ENCODE measurements at regions of chr10 and their contacts with region 1.

Region 1: GRCh38 chr10:69123747-69124562 is at the start of gene VPS26A:
- DNase-seq: peak; percentile 96 to 99
- H3K4me3 ChIP-seq: peak within 1 kb of the TSS; percentile 92 to 96
- H3K27ac ChIP-seq: peak within 1 kb of the TSS; percentile 98 to 99
- H3K4me1 ChIP-seq: peaks cover 0 to 17% of the 10 kb centered on the region in 2 donors
- H3K27me3 ChIP-seq: no peaks in the 10 kb centered on the region
- CTCF ChIP-seq: peak in 1 of 3 experiments; percentile 37
- total RNA-seq, gene VPS26A: 26.0 TPM

Region 2: GRCh38 chr10:68720793-68721672 is 402.9 kb before region 1 on chr10 and contains the start of gene CCAR1:
- intact Hi-C with region 1: loop called (anchors 5 kb)
- DNase-seq: peak; percentile 74 to 98
- H3K4me3 ChIP-seq: peak within 1 kb of the TSS; percentile 83 to 91
- H3K27ac ChIP-seq: peak within 1 kb of the TSS; percentile 91 to 97
- H3K4me1 ChIP-seq: peaks cover 0 to 10% of the 10 kb centered on the region in 2 donors
- H3K27me3 ChIP-seq: no peaks in the 10 kb centered on the region
- CTCF ChIP-seq: no peak
- total RNA-seq, gene CCAR1: 9.5 TPM

Region 3: DNA sequence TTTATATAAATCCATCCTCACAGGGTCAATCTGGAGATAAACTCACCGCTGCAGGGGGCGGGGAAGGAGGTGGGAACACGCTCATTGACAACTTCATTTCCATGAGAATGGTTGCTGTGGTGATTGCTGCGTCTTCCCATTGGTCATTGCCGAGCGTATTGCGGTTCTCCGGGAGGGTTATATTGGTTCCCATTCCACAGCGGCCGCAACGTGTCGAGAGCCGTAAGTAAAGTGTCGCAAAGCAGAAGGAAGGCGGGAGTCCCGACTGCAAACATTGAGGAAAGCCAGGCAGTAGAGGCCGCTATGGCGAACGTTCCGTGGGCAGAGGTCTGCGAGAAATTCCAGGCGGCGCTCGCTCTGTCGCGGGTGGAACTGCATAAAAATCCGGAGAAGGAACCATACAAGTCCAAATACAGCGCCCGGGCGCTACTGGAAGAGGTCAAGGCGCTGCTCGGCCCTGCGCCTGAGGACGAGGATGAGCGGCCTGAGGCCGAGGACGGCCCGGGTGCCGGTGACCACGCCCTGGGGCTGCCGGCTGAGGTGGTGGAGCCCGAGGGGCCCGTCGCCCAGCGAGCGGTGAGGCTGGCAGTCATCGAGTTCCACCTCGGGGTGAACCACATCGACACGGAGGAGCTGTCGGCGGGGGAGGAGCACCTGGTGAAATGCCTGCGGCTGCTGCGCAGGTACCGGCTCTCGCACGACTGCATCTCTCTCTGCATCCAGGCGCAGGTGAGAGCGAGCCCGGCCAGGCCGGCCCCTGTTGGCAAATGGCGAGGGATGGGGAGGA is 135.2 kb before region 1 on chr10 and contains the start of gene KIFBP:
- intact Hi-C with region 1: loop called (anchors 1 kb)
- DNase-seq: peak; percentile 89 to 98
- H3K4me3 ChIP-seq: peak within 1 kb of the TSS; percentile 71 to 85
- H3K27ac ChIP-seq: peak within 1 kb of the TSS; percentile 85 to 88
- H3K4me1 ChIP-seq: peaks cover 5 to 36% of the 10 kb centered on the region in 2 donors
- H3K27me3 ChIP-seq: no peaks in the 10 kb centered on the region
- CTCF ChIP-seq: peak; percentile 28 to 61 (median 56)
- total RNA-seq, gene KIFBP: 25.3 TPM

Region 4: DNA sequence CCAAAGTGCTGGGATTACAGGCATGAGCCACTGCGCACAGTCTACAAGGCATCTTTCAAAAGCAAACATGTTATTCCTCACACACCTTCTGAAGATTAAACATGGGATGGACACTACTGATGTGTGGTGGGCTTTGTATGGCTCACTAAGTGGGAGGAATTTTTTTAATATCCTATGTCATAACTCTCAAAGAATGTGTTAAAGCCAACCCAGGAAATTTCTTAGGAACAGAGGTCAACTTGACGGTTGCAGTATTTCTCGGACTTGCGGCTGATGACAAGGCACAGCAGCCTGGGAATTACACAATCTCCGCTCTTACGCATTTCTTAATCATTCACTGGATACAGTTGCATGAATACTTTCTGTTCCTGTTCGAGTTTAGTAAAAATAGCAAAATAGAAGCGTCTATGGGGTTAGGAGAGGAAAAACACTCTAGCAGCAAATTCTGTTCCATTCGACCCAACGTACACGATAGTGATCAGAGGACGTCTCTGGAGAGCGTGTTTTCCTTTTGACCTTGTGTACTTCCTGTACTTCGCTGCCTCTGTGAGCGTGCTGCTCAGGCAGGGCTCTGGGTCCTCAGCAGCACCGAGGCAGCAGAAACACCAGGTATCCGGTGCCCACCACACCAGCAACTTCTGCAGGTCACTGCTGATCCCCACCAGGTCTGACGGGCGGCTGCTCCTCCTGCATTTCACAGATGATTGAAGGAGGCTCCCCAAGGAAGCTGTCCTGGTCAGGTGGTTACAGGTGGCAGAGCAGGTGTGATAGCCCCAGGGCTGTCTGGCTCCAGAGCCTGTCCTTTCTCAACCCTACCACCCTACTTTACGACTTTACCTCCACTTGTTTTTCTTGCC is 62.4 kb before region 1 on chr10:
- intact Hi-C with region 1: loop called (anchors 2 kb)
- DNase-seq: peak; percentile 53 to 86
- H3K4me3 ChIP-seq: peak overlapping the region; percentile 27 to 49
- H3K27ac ChIP-seq: peak overlapping the region; percentile 87 to 96
- H3K4me1 ChIP-seq: peaks cover 10 to 19% of the 10 kb centered on the region in 2 donors
- H3K27me3 ChIP-seq: no peaks in the 10 kb centered on the region
- CTCF ChIP-seq: no peak

Region 5: DNA sequence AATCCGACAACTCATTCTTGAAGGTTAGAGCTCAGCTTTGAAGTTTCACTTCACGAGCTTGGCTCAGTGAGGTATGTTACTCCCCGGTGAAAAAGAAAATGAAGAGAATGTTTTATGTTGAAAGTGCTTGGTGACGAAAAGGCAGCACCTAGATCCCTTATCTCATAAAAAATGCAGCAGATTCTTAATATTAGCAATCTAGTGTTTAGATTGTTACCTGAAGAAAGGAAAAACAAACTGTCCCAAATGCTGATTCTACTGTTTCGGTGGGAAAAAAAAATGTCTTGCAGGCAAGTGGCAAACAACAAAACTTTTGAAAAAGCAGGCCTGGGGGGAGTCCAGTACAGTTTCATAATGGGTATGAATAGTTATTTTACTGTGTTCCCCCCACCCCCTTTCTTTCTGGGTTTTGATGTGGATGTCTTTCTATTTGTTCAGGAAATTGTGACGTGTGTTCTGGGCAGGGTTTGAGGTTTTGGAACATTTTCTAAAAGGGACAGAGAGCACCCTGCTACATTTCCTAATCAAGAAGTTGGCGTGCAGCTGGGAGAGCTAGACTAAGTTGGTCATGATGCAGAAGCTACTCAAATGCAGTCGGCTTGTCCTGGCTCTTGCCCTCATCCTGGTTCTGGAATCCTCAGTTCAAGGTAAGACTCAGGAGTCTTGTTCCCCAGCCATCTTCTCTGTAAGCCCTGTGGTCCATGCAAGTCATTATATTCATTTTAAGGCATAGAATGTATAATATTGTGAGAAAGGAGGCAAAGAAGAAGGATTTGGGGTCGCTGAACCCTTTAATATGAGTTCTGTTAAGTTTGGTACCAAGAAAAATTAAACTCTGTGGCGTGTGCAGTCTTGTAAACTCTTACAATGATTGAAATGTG is 36.1 kb before region 1 on chr10 and contains the start of gene SRGN:
- intact Hi-C with region 1: loop called (anchors 2 kb)
- DNase-seq: peak; percentile 71 to 95
- H3K4me3 ChIP-seq: peak within 1 kb of the TSS; percentile 46 to 65
- H3K27ac ChIP-seq: peak within 1 kb of the TSS; percentile 82 to 83
- H3K4me1 ChIP-seq: peaks cover 7% of the 10 kb centered on the region in 2 donors
- H3K27me3 ChIP-seq: no peaks in the 10 kb centered on the region
- CTCF ChIP-seq: no peak
- total RNA-seq, gene SRGN: 155 TPM

Region 6: GRCh38 chr10:69179743-69180524 is 56.0 kb after region 1 on chr10 and contains the start of gene SUPV3L1:
- intact Hi-C with region 1: loop called (anchors 1 kb)
- DNase-seq: peak; percentile 80 to 96
- H3K4me3 ChIP-seq: peak within 1 kb of the TSS; percentile 81 to 95
- H3K27ac ChIP-seq: peak within 1 kb of the TSS; percentile 89 to 90
- H3K4me1 ChIP-seq: peaks cover 4 to 17% of the 10 kb centered on the region in 2 donors
- H3K27me3 ChIP-seq: no peaks in the 10 kb centered on the region
- CTCF ChIP-seq: no peak
- total RNA-seq, gene SUPV3L1: 4.6 TPM

Region 7: GRCh38 chr10:69360485-69361324 is 236.8 kb after region 1 on chr10:
- intact Hi-C with region 1: loop called (anchors 5 kb)
- DNase-seq: peak; percentile 71 to 93
- H3K4me3 ChIP-seq: peak overlapping the region; percentile 6 to 41
- H3K27ac ChIP-seq: peak overlapping the region; percentile 95 to 96
- H3K4me1 ChIP-seq: peaks cover 25 to 58% of the 10 kb centered on the region in 2 donors
- H3K27me3 ChIP-seq: no peaks in the 10 kb centered on the region
- CTCF ChIP-seq: no peak

Measured in ascending aorta (tissue), 2 donors.